Mammary epithelial cell (primary cell): ENCODE measurements at regions of chr7 and their contacts with region 1.

Region 1: GRCh38 chr7:71982851-71983250 is 429.3 kb downstream of the CALN1 start:
- DNase-seq: no peak
- H3K4me3 ChIP-seq: no peak overlapping the region
- H3K27ac ChIP-seq: no peak overlapping the region
- H3K4me1 ChIP-seq: no peaks in the 10 kb centered on the region
- H3K27me3 ChIP-seq: no peaks in the 10 kb centered on the region
- CTCF ChIP-seq: no peak

Region 2: GRCh38 chr7:71937840-71938371 is 44.9 kb before region 1 on chr7:
- CTCF ChIA-PET with region 1: no interaction called
- dilution Hi-C with region 1: loop called (anchors 5 kb)
- in situ Hi-C with region 1: no loop called
- intact Hi-C with region 1: no loop called
- DNase-seq: no peak
- H3K4me3 ChIP-seq: no peak overlapping the region
- H3K27ac ChIP-seq: no peak overlapping the region
- H3K4me1 ChIP-seq: no peaks in the 10 kb centered on the region
- H3K27me3 ChIP-seq: no peaks in the 10 kb centered on the region
- CTCF ChIP-seq: no peak